CD4-positive, alpha-beta memory T cell (primary cell): ENCODE measurements at regions of chr19 and their contacts with region 1.

Region 1: DNA sequence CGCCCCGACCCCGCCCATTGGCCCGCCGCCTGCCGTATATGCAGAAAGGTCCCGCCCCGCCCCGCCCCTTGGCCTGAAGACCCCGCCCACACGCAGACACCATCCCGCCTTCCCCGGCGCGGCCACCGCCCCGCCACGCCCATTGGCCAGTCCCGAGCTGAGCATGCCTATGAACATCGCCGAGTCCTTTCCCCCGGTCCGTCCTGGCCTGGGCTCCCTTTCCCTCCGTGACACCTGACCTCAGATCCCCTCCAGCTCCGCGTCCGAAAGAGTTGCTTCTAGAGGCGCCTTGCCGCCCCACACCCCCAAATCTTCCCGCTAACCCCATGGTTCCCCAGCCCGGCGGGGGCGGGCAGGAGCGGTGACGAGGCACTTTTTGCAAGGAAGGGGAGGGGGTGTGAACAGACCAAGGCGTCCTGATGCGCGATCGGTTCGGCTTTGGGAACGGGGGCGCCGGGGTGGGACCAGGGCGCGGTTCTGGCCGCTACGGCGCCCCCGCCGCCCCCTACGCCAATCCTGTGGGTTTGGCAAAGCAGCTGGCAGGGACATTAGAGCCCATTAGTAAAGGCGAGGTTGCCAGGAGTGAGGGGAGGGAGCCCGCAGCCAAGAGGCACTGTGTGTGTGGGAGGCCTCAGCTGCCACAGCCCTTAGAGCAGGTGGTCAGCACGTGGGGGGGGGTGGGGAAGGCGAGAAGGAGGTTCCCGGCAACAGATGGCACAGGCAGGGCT is 406 bp upstream of the NUMBL start:
- DNase-seq: peak; percentile 78 to 85 (median 80)
- H3K4me3 ChIP-seq: peak overlapping the region; percentile 66 to 73
- H3K4me3 Mint-ChIP-seq: peak overlapping the region; percentile 85 to 94 (median 90)
- H3K27ac ChIP-seq: peak overlapping the region; percentile 60
- H3K27ac Mint-ChIP-seq: peak overlapping the region; percentile 61 to 97 (median 92)
- H3K4me1 ChIP-seq: peaks cover 8% of the 10 kb centered on the region
- H3K4me1 Mint-ChIP-seq: peaks cover 2 to 6% (median 4%) of the 10 kb centered on the region in 4 donors
- H3K27me3 ChIP-seq: no peaks in the 10 kb centered on the region
- H3K27me3 Mint-ChIP-seq: no peaks in the 10 kb centered on the region

Region 2: DNA sequence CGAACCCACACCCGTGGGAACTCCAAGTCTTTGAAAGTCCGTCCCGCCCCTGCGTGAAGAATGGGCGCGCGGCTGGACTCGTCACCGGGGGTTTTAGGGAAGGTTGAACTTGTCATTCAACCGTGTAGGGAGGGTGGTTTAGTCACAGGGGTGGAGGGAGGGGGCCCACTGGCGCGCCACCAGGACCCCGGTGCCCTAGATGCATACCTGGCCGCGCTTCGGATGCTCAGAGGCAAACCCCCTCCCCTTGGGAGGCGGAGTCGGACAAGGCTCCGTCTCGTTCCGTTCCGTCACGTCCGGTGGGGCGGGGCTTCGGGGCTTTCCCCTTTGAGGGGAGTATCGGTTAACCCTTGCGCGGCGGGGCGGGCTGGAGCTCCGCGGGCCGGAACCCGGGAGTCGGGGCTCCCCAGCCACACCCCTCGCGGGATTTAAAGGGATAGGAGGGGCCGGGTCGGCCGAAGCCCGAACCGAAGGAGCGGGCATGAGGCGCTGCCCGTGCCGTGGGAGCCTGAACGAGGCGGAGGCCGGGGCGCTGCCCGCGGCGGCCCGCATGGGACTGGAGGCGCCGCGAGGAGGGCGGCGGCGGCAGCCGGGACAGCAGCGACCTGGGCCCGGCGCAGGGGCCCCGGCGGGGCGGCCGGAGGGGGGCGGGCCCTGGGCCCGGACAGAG is 25.9 kb after region 1 on chr19 and contains the starts of genes COQ8B and ITPKC:
- CTCF ChIA-PET with region 1: no interaction called
- POLR2A ChIA-PET with region 1: interaction called, 13 read pairs
- intact Hi-C with region 1: loop called (anchors 1 kb)
- DNase-seq: peak; percentile 98 to 100 (median 99)
- H3K4me3 ChIP-seq: peak within 1 kb of the TSS; percentile 78 to 83
- H3K4me3 Mint-ChIP-seq: peak within 1 kb of the TSS; percentile 87 to 97 (median 92)
- H3K27ac ChIP-seq: peak within 1 kb of the TSS; percentile 98
- H3K27ac Mint-ChIP-seq: peak within 1 kb of the TSS; percentile 96 to 99 (median 98)
- H3K4me1 ChIP-seq: peaks cover 70% of the 10 kb centered on the region
- H3K4me1 Mint-ChIP-seq: peaks cover 40 to 83% (median 58%) of the 10 kb centered on the region in 4 donors
- H3K27me3 ChIP-seq: no peaks in the 10 kb centered on the region
- H3K27me3 Mint-ChIP-seq: no peaks in the 10 kb centered on the region
- total RNA-seq, gene COQ8B: 48.0 to 54.7 TPM
- total RNA-seq, gene ITPKC: 8.1 to 10.2 TPM

Region 3: DNA sequence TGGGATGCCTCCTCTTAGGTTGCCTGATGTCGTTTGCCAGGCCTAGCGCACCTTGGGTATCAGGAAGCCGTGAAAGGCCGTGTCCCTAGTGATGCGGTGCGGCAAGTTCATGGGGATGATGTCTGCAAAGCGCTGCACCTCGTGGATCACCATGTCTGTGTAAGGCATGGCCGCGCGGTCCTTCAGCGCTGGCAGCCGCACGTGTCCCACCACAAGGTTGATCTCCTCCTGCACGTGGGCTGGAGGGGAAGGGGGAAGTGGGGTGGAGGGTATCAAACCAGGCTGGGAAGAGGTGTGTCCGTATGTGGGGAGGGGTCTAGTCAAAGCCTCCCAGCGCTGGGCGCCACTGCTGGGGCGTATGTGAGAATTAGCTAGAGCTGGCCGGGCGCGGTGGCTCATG is 131.3 kb after region 1 on chr19:
- CTCF ChIA-PET with region 1: interaction called, 3 read pairs
- POLR2A ChIA-PET with region 1: interaction called, 3 read pairs
- intact Hi-C with region 1: loop called (anchors 1 kb)
- DNase-seq: no peak
- H3K4me3 ChIP-seq: no peak overlapping the region
- H3K4me3 Mint-ChIP-seq: peak overlapping the region in 1 of 8 donors; percentile 6
- H3K27ac ChIP-seq: no peak overlapping the region
- H3K27ac Mint-ChIP-seq: peak overlapping the region in 1 of 7 donors; percentile 57
- H3K4me1 ChIP-seq: peaks cover 40% of the 10 kb centered on the region
- H3K4me1 Mint-ChIP-seq: peaks cover 24 to 63% (median 39%) of the 10 kb centered on the region in 4 donors
- H3K27me3 ChIP-seq: no peaks in the 10 kb centered on the region
- H3K27me3 Mint-ChIP-seq: no peaks in the 10 kb centered on the region